ENCODE measurements at regions of chr11 and their contacts with region 1.

Region 1: DNA sequence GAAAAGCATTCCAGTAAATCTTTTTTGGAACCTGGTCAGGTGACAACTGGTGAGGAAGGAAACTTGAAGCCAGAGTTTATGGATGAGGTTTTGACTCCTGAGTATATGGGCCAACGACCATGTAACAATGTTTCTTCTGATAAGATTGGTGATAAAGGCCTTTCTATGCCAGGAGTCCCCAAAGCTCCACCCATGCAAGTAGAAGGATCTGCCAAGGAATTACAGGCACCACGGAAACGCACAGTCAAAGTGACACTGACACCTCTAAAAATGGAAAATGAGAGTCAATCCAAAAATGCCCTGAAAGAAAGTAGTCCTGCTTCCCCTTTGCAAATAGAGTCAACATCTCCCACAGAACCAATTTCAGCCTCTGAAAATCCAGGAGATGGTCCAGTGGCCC is 24.1 kb upstream of the TTC36 start:
- DNase-seq: no peak
- H3K4me3 ChIP-seq: no peak overlapping the region
- CTCF ChIP-seq: no peak
- POLR2A ChIP-seq: no peak

Region 2: GRCh38 chr11:118380571-118380970 is 122.6 kb before region 1 on chr11:
- intact Hi-C with region 1: loop called (anchors 10 kb)
- DNase-seq: no peak
- H3K4me3 ChIP-seq: no peak overlapping the region
- CTCF ChIP-seq: no peak
- POLR2A ChIP-seq: no peak

Measured in lower leg skin (tissue), 4 donors.